B cell (primary cell): ENCODE measurements at regions of chr3 and their contacts with region 1.

Region 1: GRCh38 chr3:45043728-45044299 is 17.7 kb downstream of the CLEC3B start:
- DNase-seq: no peak
- ATAC-seq: no peak
- H3K4me3 ChIP-seq: no peak overlapping the region
- H3K4me3 Mint-ChIP-seq: no peak overlapping the region
- H3K27ac ChIP-seq: no peak overlapping the region
- H3K27ac Mint-ChIP-seq: no peak overlapping the region
- H3K4me1 ChIP-seq: peaks cover 5 to 13% of the 10 kb centered on the region in 2 donors
- H3K4me1 Mint-ChIP-seq: peaks cover 10% of the 10 kb centered on the region
- H3K27me3 ChIP-seq: peaks cover 0 to 5% (median 2%) of the 10 kb centered on the region in 4 experiments
- H3K27me3 Mint-ChIP-seq: peaks cover 19% of the 10 kb centered on the region
- CTCF ChIP-seq: no peak

Region 2: GRCh38 chr3:44648564-44649229 is 395.1 kb before region 1 on chr3 and contains the start of gene ZNF35:
- CTCF ChIA-PET with region 1: no interaction called
- POLR2A ChIA-PET with region 1: no interaction called
- intact Hi-C with region 1: no loop called
- DNase-seq: peak; percentile 67
- ATAC-seq: peak; percentile 84
- H3K4me3 ChIP-seq: peak within 1 kb of the TSS; percentile 43 to 95 (median 86)
- H3K4me3 Mint-ChIP-seq: peak within 1 kb of the TSS; percentile 96
- H3K27ac ChIP-seq: peak within 1 kb of the TSS; percentile 27 to 74
- H3K27ac Mint-ChIP-seq: peak within 1 kb of the TSS; percentile 80
- H3K4me1 ChIP-seq: peaks cover 8 to 15% of the 10 kb centered on the region in 2 donors
- H3K4me1 Mint-ChIP-seq: peaks cover 23% of the 10 kb centered on the region
- H3K27me3 ChIP-seq: no peaks in the 10 kb centered on the region
- H3K27me3 Mint-ChIP-seq: no peaks in the 10 kb centered on the region
- CTCF ChIP-seq: no peak
- total RNA-seq, gene ZNF35: 12.1 and 16.6 TPM in 2 replicates

Region 3: GRCh38 chr3:45055411-45056143 is 11.8 kb after region 1 on chr3:
- CTCF ChIA-PET with region 1: interaction called, 33 read pairs
- POLR2A ChIA-PET with region 1: no interaction called
- intact Hi-C with region 1: no loop called
- DNase-seq: no peak
- ATAC-seq: no peak
- H3K4me3 ChIP-seq: no peak overlapping the region
- H3K4me3 Mint-ChIP-seq: no peak overlapping the region
- H3K27ac ChIP-seq: no peak overlapping the region
- H3K27ac Mint-ChIP-seq: no peak overlapping the region
- H3K4me1 ChIP-seq: no peaks in the 10 kb centered on the region
- H3K4me1 Mint-ChIP-seq: no peaks in the 10 kb centered on the region
- H3K27me3 ChIP-seq: peaks cover 0 to 4% (median 0%) of the 10 kb centered on the region in 4 experiments
- H3K27me3 Mint-ChIP-seq: peaks cover 34% of the 10 kb centered on the region
- CTCF ChIP-seq: no peak

Region 4: DNA sequence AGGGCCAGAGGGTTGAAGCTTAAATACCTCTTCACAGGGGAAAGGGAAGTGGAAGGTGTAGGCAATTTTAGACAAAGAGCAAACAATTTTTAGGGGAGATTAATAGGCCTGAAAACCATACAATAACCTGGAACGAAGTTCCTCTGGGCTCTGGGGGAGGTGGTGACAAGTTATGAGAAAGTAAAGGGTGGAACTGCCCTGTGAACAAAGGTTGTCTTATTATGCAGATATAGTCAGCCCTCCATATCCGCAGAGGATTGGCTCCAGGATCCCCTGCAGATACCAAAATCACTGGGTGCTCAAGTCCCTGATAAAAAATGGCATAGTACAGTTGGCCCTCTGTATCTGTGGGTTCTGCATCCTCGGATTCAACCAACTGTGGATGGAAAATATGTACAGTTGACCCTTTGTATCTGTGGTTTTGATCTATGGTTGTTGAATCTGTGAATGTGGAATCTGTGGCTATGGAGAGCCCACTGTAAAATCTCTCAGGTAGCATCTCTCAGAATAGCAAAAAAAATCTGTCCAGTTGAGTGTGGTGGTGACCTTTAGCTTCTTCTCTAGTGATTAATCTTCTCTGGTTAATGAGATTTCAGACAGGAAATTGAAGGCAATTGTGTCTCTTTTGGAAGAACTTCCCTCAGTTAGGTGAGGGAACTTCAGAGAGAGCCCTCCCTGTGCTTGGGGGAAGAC is 22.4 kb after region 1 on chr3:
- CTCF ChIA-PET with region 1: no interaction called
- POLR2A ChIA-PET with region 1: no interaction called
- intact Hi-C with region 1: no loop called
- DNase-seq: no peak
- ATAC-seq: no peak
- H3K4me3 ChIP-seq: no peak overlapping the region
- H3K4me3 Mint-ChIP-seq: no peak overlapping the region
- H3K27ac ChIP-seq: no peak overlapping the region
- H3K27ac Mint-ChIP-seq: no peak overlapping the region
- H3K4me1 ChIP-seq: no peaks in the 10 kb centered on the region
- H3K4me1 Mint-ChIP-seq: peaks cover 5% of the 10 kb centered on the region
- H3K27me3 ChIP-seq: peaks cover 0 to 2% (median 0%) of the 10 kb centered on the region in 4 experiments
- H3K27me3 Mint-ChIP-seq: peaks cover 9% of the 10 kb centered on the region
- CTCF ChIP-seq: no peak

Region 5: DNA sequence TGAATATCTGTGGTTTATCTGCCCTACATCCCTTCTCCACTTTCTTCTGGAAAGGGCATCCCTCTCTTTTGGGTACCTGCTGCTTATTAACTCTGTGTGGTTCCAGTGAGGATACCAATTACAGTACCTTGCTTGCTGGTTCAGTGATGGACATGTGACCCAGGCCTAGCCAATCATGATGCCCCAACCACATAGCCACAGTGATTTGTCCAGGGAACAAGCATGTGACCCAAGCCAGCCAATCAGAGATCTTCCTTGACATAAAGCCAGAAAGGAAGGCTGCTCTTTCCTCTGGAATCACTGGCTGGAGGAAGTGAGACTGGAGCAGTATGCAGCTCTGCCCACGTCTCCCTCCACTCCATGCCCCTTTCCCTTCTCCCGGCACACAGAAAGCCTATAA is 193.2 kb after region 1 on chr3:
- CTCF ChIA-PET with region 1: no interaction called
- POLR2A ChIA-PET with region 1: no interaction called
- intact Hi-C with region 1: no loop called
- DNase-seq: no peak
- ATAC-seq: no peak
- H3K4me3 ChIP-seq: no peak overlapping the region
- H3K4me3 Mint-ChIP-seq: no peak overlapping the region
- H3K27ac ChIP-seq: no peak overlapping the region
- H3K27ac Mint-ChIP-seq: no peak overlapping the region
- H3K4me1 ChIP-seq: no peaks in the 10 kb centered on the region
- H3K4me1 Mint-ChIP-seq: no peaks in the 10 kb centered on the region
- H3K27me3 ChIP-seq: peaks cover 0 to 21% (median 3%) of the 10 kb centered on the region in 4 experiments
- H3K27me3 Mint-ChIP-seq: peaks cover 21% of the 10 kb centered on the region
- CTCF ChIP-seq: no peak

Region 6: DNA sequence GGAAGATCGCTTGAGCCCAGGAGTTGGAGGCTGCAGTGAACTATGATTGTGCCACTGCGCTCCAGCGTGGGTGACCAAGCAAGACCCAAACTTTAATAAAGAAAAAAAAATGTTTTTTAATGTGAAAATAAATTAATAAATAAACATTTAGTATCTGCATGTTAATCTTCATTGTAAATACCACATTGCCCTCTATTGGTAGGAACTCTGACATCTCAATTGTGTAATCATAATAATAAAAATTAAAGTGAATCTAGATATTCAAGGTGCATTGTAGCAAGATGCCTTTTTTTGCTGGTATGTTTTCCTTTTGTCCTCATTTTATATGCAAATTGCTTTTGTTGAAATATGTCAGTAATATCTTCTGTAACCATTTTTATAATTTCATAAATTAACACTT is 455.7 kb after region 1 on chr3:
- CTCF ChIA-PET with region 1: interaction called, 16 read pairs
- POLR2A ChIA-PET with region 1: no interaction called
- intact Hi-C with region 1: no loop called
- DNase-seq: no peak
- ATAC-seq: no peak
- H3K4me3 ChIP-seq: no peak overlapping the region
- H3K4me3 Mint-ChIP-seq: no peak overlapping the region
- H3K27ac ChIP-seq: no peak overlapping the region
- H3K27ac Mint-ChIP-seq: no peak overlapping the region
- H3K4me1 ChIP-seq: no peaks in the 10 kb centered on the region
- H3K4me1 Mint-ChIP-seq: no peaks in the 10 kb centered on the region
- H3K27me3 ChIP-seq: no peaks in the 10 kb centered on the region
- H3K27me3 Mint-ChIP-seq: no peaks in the 10 kb centered on the region
- CTCF ChIP-seq: peak; percentile 24

Region 7: DNA sequence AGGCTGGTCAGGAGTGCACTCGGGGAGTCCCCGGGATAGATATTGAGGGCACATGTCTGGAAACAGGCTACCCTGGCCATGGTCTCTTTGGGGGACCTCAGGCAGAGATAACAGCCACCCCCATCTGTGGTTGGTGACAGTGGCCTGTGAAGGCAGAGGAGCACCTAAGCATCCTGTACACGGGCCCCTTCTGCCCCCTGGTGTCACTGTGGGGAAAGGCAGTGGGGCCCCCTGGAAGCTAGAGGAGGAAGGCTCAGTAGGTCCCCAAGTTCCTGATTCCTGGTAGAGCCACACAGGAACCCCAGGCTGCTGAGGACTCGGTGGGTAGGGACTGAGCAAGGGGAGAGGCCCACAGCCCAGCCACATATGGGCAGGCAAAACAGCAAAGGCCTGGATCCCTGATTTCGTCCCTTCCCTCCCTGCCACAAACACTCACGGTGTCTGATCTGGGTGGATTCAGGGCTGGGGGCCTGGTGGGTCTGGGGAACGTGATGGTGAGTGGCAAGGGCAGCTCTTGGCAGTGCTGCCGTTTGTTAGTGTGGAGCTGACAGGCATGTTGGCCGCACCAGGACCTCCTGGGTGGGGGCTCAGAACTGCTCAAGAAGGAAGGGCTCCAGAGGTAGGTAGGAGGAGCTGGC is 885.3 kb after region 1 on chr3:
- CTCF ChIA-PET with region 1: interaction called, 4 read pairs
- POLR2A ChIA-PET with region 1: no interaction called
- intact Hi-C with region 1: loop called (anchors 5 kb)
- DNase-seq: peak; percentile 70
- ATAC-seq: peak; percentile 81
- H3K4me3 ChIP-seq: no peak overlapping the region
- H3K4me3 Mint-ChIP-seq: no peak overlapping the region
- H3K27ac ChIP-seq: no peak overlapping the region
- H3K27ac Mint-ChIP-seq: no peak overlapping the region
- H3K4me1 ChIP-seq: no peaks in the 10 kb centered on the region
- H3K4me1 Mint-ChIP-seq: no peaks in the 10 kb centered on the region
- H3K27me3 ChIP-seq: no peaks in the 10 kb centered on the region
- H3K27me3 Mint-ChIP-seq: no peaks in the 10 kb centered on the region
- CTCF ChIP-seq: peak; percentile 81